ENCODE measurements at regions of chr2 and their contacts with region 1.

Region 1: GRCh38 chr2:240560480-240561326 is 546 bp downstream of the DUSP28 start:
- DNase-seq: peak; percentile 100
- ATAC-seq: peak; percentile 60
- H3K4me3 Mint-ChIP-seq: peak overlapping the region; percentile 82
- H3K27ac Mint-ChIP-seq: peak overlapping the region; percentile 89
- H3K4me1 Mint-ChIP-seq: peaks cover 76% of the 10 kb centered on the region
- H3K27me3 Mint-ChIP-seq: no peaks in the 10 kb centered on the region

Region 2: DNA sequence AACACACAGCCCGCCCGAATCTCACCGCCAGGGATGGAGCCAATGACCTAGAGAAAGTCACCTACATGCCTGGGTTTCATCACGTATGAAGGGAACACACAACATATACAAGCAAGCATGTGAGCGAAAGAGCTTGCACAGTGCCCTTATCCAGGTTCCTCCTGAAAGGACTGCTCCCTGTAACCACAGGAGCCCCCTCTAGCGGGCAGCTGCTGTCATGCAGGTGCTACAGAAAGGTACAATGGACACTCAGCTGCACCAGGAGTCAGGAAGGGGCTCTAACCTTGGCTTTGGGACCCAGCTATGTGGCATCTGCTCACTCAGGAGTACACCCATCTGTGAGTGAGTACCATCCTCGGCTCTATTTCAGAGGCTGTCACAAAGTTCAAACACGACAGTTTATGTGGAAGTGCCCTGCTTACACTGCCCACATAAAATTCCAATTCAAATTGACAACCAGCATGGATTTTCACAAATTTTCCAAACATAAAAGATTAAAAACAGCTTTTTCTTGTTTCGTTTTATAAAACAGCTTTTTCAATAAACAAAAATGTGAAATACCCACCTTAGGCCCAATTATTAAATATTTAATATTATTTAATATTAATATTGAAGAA is 539.1 kb before region 1 on chr2:
- CTCF ChIA-PET with region 1: no interaction called
- POLR2A ChIA-PET with region 1: no interaction called
- intact Hi-C with region 1: loop called in 1 of 2 experiments (anchors 2 kb)
- DNase-seq: peak; percentile 83
- ATAC-seq: peak; percentile 28
- H3K4me3 Mint-ChIP-seq: no peak overlapping the region
- H3K27ac Mint-ChIP-seq: no peak overlapping the region
- H3K4me1 Mint-ChIP-seq: peaks cover 25% of the 10 kb centered on the region
- H3K27me3 Mint-ChIP-seq: no peaks in the 10 kb centered on the region

Region 3: GRCh38 chr2:240434728-240435456 is 125.8 kb before region 1 on chr2:
- CTCF ChIA-PET with region 1: no interaction called
- POLR2A ChIA-PET with region 1: no interaction called
- intact Hi-C with region 1: loop called in 1 of 2 experiments (anchors 2 kb)
- DNase-seq: peak; percentile 91
- ATAC-seq: peak; percentile 64
- H3K4me3 Mint-ChIP-seq: peak overlapping the region; percentile 68
- H3K27ac Mint-ChIP-seq: peak overlapping the region; percentile 26
- H3K4me1 Mint-ChIP-seq: peaks cover 12% of the 10 kb centered on the region
- H3K27me3 Mint-ChIP-seq: peaks cover 15% of the 10 kb centered on the region

Region 4: GRCh38 chr2:240586198-240586918 is 25.7 kb after region 1 on chr2 and contains the start of gene CAPN10:
- CTCF ChIA-PET with region 1: interaction called, 61 read pairs
- POLR2A ChIA-PET with region 1: interaction called, 34 read pairs
- intact Hi-C with region 1: loop called (anchors 1 kb)
- DNase-seq: peak; percentile 98
- ATAC-seq: peak; percentile 91
- H3K4me3 Mint-ChIP-seq: peak within 1 kb of the TSS; percentile 87
- H3K27ac Mint-ChIP-seq: peak within 1 kb of the TSS; percentile 85
- H3K4me1 Mint-ChIP-seq: peaks cover 38% of the 10 kb centered on the region
- H3K27me3 Mint-ChIP-seq: no peaks in the 10 kb centered on the region
- total RNA-seq, gene CAPN10: 22.1 to 30.2 TPM

Region 5: GRCh38 chr2:240851078-240851991 is 290.6 kb after region 1 on chr2:
- CTCF ChIA-PET with region 1: no interaction called
- POLR2A ChIA-PET with region 1: no interaction called
- intact Hi-C with region 1: no loop called
- DNase-seq: peak; percentile 91
- ATAC-seq: peak; percentile 97
- H3K4me3 Mint-ChIP-seq: no peak overlapping the region
- H3K27ac Mint-ChIP-seq: no peak overlapping the region
- H3K4me1 Mint-ChIP-seq: no peaks in the 10 kb centered on the region
- H3K27me3 Mint-ChIP-seq: peaks cover 3% of the 10 kb centered on the region

Region 6: DNA sequence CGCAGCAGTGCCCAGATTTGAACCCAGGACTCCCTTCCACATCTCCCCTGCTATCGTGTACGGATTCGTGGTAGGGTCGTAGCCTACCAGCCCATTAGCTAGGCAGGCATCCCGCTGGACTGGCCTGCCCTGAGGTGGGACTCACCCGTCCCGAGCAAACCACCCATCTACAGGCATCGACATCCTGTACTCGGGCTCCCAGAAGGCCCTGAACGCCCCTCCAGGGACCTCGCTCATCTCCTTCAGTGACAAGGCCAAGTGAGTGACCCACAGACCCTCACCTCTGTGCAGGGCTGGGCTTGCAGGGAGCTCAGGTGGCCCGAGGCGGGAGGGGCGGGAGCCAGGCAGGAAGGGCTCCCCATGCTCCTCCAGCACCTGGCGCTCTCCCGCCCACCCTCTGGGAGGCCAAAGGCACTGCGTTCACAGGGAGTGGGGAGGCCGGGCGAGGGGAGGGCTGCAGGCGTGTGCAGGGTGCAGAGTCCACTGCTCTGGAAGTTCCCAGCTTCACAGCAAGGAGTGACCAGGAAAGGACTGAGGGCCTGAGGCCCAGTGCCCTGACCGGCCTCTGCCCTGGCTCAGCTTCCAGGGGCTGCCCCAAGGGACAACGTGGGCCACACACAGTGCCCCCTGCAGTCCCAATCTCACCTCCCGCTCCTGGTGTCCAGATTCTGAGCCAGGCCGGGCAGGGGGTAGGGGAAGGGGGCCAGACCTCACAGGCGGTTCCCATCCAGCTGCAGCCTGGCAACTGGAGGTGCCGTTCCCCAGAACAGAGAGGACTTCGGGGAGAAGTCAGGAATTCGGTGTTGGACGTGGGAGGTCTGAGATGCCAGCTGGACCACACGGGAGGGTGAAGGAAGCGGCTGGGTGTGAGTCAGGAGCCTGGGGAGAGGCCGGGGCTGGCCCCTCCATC is 313.4 kb after region 1 on chr2:
- CTCF ChIA-PET with region 1: no interaction called
- POLR2A ChIA-PET with region 1: no interaction called
- intact Hi-C with region 1: no loop called
- DNase-seq: no peak
- ATAC-seq: no peak
- H3K4me3 Mint-ChIP-seq: no peak overlapping the region
- H3K27ac Mint-ChIP-seq: no peak overlapping the region
- H3K4me1 Mint-ChIP-seq: no peaks in the 10 kb centered on the region
- H3K27me3 Mint-ChIP-seq: no peaks in the 10 kb centered on the region

Region 7: GRCh38 chr2:241217320-241218031 is 656.8 kb after region 1 on chr2:
- CTCF ChIA-PET with region 1: no interaction called
- POLR2A ChIA-PET with region 1: no interaction called
- intact Hi-C with region 1: loop called in 1 of 2 experiments (anchors 2 kb)
- DNase-seq: peak; percentile 60
- ATAC-seq: peak; percentile 37
- H3K4me3 Mint-ChIP-seq: peak overlapping the region; percentile 56
- H3K27ac Mint-ChIP-seq: no peak overlapping the region
- H3K4me1 Mint-ChIP-seq: peaks cover 9% of the 10 kb centered on the region
- H3K27me3 Mint-ChIP-seq: peaks cover 2% of the 10 kb centered on the region

Region 8: GRCh38 chr2:241637000-241637791 is 1076.5 kb after region 1 on chr2 and contains the starts of genes ATG4B and THAP4:
- CTCF ChIA-PET with region 1: no interaction called
- POLR2A ChIA-PET with region 1: no interaction called
- intact Hi-C with region 1: loop called in 1 of 2 experiments (anchors 2 kb)
- DNase-seq: peak; percentile 90
- ATAC-seq: peak; percentile 69
- H3K4me3 Mint-ChIP-seq: peak within 1 kb of the TSS; percentile 84
- H3K27ac Mint-ChIP-seq: peak within 1 kb of the TSS; percentile 96
- H3K4me1 Mint-ChIP-seq: peaks cover 50% of the 10 kb centered on the region
- H3K27me3 Mint-ChIP-seq: no peaks in the 10 kb centered on the region
- total RNA-seq, gene ATG4B: 71.8 to 80.1 TPM
- total RNA-seq, gene THAP4: 42.5 to 54.1 TPM

Region 9: DNA sequence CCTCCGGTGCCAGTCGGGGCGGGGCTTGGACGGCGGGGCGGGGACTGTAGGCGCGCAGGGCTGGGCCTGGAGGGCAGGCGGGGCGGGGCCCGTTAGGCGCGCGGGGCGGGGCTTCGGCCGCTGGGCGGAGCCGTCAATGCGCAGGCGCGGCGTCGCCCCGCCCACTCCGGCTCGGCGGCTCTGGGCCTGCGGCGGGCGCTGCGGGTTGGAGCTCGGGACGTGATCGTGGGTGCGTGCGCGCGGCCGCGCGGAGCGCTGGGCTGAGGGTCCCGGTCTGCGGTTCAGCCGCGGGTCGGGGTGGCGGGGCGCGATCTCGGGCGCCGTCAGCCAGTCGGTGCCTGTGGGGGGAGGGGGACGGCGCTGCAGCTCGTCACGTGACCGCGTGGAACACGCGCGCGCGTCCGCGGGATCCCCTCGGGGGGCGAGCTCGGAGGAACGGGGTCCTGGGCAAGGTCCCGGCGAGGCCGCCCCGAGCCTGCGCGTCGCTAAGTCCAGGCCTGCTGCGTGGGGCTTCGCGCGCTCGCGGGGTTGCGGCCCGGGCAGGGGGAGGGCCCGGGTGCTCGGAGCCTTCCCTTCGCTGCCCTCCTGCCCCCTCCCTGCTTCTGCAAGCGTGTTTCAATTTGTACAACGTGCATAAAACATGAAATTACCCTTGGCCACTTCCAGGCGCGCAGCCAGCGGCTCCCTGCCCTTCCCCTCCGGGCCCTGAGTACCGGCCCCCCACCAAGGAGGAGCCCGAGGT is 1173.9 kb after region 1 on chr2 and contains the start of gene D2HGDH:
- CTCF ChIA-PET with region 1: no interaction called
- POLR2A ChIA-PET with region 1: no interaction called
- intact Hi-C with region 1: loop called in 1 of 2 experiments (anchors 10 kb)
- DNase-seq: peak; percentile 98
- ATAC-seq: peak; percentile 92
- H3K4me3 Mint-ChIP-seq: peak within 1 kb of the TSS; percentile 79
- H3K27ac Mint-ChIP-seq: peak within 1 kb of the TSS; percentile 70
- H3K4me1 Mint-ChIP-seq: peaks cover 57% of the 10 kb centered on the region
- H3K27me3 Mint-ChIP-seq: no peaks in the 10 kb centered on the region
- total RNA-seq, gene D2HGDH: 18.2 to 34.1 TPM

Measured in activated CD4-positive, alpha-beta T cell treated with anti-CD3 and anti-CD28 coated beads for 36 hours (primary cell).